ENCODE measurements at regions of chr22 and their contacts with region 1.

Region 1: DNA sequence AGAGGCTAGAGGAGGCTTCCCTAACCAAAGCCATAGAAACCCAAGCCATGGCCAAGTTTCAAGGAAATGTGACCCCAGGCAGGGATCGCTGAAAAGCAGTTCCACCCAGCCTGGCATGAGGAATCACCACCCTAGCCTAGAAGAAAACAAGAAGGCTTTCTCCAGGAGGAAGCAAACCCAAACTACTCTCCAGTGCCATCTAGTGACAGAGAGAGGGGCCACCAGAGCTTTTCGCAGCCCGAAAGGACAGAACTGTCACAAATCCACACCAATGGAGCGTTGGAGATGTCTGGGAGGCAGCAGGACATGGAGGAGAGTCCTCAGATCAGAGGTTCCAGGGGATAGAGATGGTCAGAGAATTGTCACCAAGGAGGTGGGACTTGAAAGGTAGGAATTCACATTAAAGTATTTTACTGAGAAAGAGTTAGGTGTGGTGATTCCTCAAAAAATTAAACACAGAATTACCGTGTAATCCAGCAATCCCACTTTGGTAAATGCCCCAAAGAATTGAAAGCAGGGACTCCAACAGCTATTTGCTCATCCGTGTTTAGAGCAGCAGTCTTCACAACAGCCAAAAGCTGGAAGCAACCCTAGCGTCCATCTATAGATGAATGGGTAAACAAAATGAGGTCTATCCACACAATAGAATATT is 67.3 kb upstream of the NUP50 start:
- DNase-seq: peak in 1 of 3 donors; percentile 55
- ATAC-seq: peak; percentile 77 to 89 (median 84)
- H3K4me3 ChIP-seq: no peak overlapping the region
- H3K27ac ChIP-seq: no peak overlapping the region
- H3K4me1 ChIP-seq: no peaks in the 10 kb centered on the region
- H3K27me3 ChIP-seq: no peaks in the 10 kb centered on the region
- CTCF ChIP-seq: peak; percentile 45 to 81 (median 76)
- POLR2A ChIP-seq: no peak

Region 2: DNA sequence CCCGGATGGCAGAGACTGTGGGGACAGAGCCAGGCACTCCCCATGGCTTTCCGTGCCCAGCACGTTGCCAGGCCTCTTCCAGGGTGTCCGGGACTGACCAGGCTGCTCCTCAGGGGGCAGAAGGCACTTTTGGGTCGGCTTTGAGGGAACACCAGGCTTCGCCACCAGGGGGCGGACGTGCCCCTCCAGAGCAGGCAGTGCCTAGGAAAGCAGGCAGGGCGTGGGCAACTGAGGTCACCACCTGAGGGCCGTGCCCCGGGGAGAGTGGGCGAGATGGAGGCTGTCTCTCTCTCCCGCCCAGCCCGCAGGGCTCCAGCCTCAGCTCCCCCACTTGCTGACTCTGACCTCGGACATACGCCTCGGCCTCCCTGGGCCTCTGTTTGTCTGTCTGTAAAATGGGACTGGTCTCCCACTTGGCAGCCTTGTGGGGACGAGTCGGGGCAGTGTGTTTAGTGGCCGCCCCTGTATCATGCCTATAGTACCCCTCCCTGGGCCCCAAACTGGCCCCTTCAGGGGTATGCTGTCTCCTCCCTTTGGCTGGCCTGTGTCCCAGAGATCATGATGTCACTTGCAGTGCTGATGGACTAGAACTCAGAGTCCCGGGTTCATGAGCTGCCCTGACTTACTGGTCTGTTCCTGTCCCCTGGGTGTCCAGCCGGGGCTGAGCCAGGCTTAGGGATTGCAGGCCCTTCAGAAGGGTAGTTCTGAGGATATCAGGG is 398.8 kb before region 1 on chr22:
- intact Hi-C with region 1: loop called in 1 of 2 experiments (anchors 10 kb)
- DNase-seq: peak; percentile 81 to 83 (median 83)
- ATAC-seq: peak; percentile 56 to 67 (median 62)
- H3K4me3 ChIP-seq: no peak overlapping the region
- H3K27ac ChIP-seq: no peak overlapping the region
- H3K4me1 ChIP-seq: peaks cover 0 to 6% (median 0%) of the 10 kb centered on the region in 4 donors
- H3K27me3 ChIP-seq: no peaks in the 10 kb centered on the region
- CTCF ChIP-seq: peak; percentile 91 to 96 (median 93)
- POLR2A ChIP-seq: no peak

Region 3: DNA sequence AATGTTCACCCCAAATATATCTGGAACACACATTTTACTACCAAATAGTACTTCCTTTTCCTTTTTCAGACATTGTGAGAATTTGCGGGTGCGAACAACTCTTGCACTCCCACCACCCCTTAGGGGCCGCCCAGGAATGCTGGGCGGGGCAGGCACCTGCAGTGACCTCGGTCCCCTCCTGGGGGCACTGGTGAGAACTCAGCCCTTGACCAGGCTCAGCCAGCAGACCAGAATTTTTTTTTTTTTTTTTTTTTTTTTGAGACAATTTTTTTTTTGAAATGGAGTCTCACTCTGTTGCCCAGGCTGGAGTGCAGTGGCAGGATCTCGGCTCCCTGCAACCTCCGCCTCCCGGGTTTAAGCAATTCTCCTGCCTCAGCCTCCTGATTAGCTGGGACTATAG is 268.2 kb before region 1 on chr22:
- intact Hi-C with region 1: loop called in 1 of 2 experiments (anchors 10 kb)
- DNase-seq: peak in 1 of 3 donors; percentile 8
- ATAC-seq: no peak
- H3K4me3 ChIP-seq: no peak overlapping the region
- H3K27ac ChIP-seq: no peak overlapping the region
- H3K4me1 ChIP-seq: no peaks in the 10 kb centered on the region
- H3K27me3 ChIP-seq: no peaks in the 10 kb centered on the region
- CTCF ChIP-seq: peak in 3 of 4 donors; percentile 18 to 39 (median 25)
- POLR2A ChIP-seq: no peak

Measured in right lobe of liver (tissue), 6 donors.